ENCODE measurements at regions of chr4 and their contacts with region 1.

Region 1: DNA sequence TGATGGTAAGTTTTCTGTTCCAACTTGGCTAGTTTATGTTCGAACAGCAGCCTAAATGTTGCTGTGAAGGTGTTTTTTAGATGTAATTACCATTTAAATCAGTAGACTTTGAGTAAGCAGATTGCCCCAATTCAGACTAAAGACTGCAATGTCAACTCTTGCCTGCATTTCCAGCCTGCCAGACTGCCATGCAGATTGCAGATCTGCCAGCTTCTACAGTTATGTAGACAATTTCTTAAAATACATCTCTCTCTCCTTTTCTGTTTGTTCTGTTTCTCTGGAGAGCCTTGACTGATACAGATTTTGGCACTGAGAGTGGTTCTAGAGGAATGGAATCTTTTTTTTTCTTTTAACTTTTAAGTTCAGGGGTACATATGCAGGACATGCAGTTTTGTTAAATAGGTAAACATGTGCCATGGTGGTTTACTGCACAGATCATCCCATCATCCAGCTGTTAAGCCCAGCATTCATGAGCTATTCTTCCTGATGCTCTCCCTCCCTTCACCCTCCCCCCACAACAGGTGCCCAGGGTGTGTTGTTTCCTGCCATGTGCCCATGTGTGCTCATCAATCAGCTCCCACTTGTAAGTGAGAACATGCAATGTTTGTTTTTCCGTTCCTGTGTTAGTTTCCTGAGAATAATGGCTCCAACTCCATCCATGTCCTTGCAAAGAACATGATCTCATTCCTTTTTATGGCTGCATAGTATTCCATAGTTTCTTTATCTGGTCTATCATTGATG is 227.8 kb downstream of the CPE start:
- DNase-seq: no peak
- H3K4me3 Mint-ChIP-seq: no peak overlapping the region
- H3K27ac Mint-ChIP-seq: no peak overlapping the region
- H3K4me1 Mint-ChIP-seq: peaks cover 5% of the 10 kb centered on the region
- H3K27me3 Mint-ChIP-seq: no peaks in the 10 kb centered on the region

Region 2: DNA sequence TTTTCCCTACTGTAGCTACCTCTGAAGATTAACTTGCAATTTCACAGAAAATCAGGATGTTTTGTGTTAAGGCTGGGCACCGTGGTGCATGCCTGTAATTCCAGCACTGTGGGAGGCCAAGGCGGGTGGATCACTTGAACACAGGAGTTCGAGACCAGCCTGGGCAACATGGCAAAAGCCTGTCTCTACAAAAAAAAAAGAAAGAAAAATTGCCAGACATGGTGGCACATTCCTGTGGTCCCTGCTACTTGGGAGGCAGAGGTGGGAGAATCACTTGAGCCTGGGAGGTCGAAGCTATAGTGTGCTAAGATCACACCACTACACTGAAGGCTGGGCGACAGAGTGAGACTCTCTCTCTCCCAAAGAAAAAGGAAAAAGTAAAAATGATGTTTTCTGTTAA is 702.3 kb before region 1 on chr4:
- CTCF ChIA-PET with region 1: no interaction called
- POLR2A ChIA-PET with region 1: no interaction called
- intact Hi-C with region 1: no loop called
- DNase-seq: no peak
- H3K4me3 Mint-ChIP-seq: no peak overlapping the region
- H3K27ac Mint-ChIP-seq: no peak overlapping the region
- H3K4me1 Mint-ChIP-seq: no peaks in the 10 kb centered on the region
- H3K27me3 Mint-ChIP-seq: no peaks in the 10 kb centered on the region

Region 3: DNA sequence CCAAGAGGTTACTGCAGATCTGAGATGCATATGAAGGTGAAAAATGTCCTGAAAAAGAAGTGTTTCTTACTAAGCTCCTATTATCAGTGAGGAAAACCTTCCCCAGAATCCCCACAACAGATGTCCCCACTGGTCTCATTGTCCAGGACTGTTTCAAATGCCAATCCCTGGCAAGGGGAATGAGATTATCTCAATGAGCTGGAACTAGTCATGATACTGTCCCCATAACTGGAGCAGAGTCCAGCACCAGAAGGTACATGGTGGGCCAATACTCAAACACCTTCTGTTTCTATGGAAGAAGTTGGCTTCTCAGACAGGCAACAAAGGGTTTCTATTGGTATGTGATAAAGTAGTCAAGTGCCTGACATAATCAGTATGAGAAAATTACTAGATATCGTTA is 45.3 kb after region 1 on chr4:
- CTCF ChIA-PET with region 1: no interaction called
- POLR2A ChIA-PET with region 1: no interaction called
- intact Hi-C with region 1: no loop called
- DNase-seq: no peak
- H3K4me3 Mint-ChIP-seq: no peak overlapping the region
- H3K27ac Mint-ChIP-seq: no peak overlapping the region
- H3K4me1 Mint-ChIP-seq: no peaks in the 10 kb centered on the region
- H3K27me3 Mint-ChIP-seq: no peaks in the 10 kb centered on the region

Region 4: DNA sequence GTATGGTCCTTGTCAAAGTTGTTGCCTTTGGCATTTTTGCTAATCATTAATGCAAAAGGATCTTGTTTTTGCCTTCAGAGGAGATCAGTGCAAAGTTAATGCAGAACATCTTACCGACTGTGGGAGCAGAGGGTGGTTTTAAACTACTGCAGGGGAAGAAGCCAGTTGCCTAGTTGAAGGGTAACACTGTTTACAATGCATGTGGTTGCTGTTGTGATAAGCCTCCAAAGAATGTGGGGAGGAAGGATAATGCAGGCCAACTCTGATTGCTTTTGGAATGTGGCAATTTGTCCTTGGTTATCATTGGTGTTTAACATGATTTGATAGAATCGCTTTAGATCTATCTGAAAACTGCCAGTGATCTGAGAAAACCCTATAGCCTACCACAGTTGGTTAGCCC is 62.1 kb after region 1 on chr4:
- CTCF ChIA-PET with region 1: no interaction called
- POLR2A ChIA-PET with region 1: no interaction called
- intact Hi-C with region 1: loop called (anchors 2 kb)
- DNase-seq: no peak
- H3K4me3 Mint-ChIP-seq: no peak overlapping the region
- H3K27ac Mint-ChIP-seq: no peak overlapping the region
- H3K4me1 Mint-ChIP-seq: no peaks in the 10 kb centered on the region
- H3K27me3 Mint-ChIP-seq: no peaks in the 10 kb centered on the region

Measured in activated CD4-positive, alpha-beta memory T cell treated with anti-CD3 and anti-CD28 coated beads for 36 hours (primary cell).